T-cell (primary cell): ENCODE measurements at regions of chr9 and their contacts with region 1.

Region 1: GRCh38 chr9:3909966-3910650 is 384.3 kb upstream of the RFX3 start:
- DNase-seq: no peak
- ATAC-seq: no peak
- H3K4me3 ChIP-seq: no peak overlapping the region
- H3K4me3 Mint-ChIP-seq: no peak overlapping the region
- H3K27ac ChIP-seq: no peak overlapping the region
- H3K27ac Mint-ChIP-seq: no peak overlapping the region
- H3K4me1 ChIP-seq: no peaks in the 10 kb centered on the region
- H3K4me1 Mint-ChIP-seq: no peaks in the 10 kb centered on the region
- H3K27me3 ChIP-seq: no peaks in the 10 kb centered on the region
- H3K27me3 Mint-ChIP-seq: peaks cover 0 to 3% of the 10 kb centered on the region in 2 donors

Region 2: GRCh38 chr9:2872257-2872935 is 1037.7 kb before region 1 on chr9:
- CTCF ChIA-PET with region 1: no interaction called
- POLR2A ChIA-PET with region 1: interaction called in 1 of 2 experiments, 10 read pairs
- DNase-seq: peak in 6 of 35 experiments; percentile 3 to 54 (median 6)
- ATAC-seq: peak; percentile 46 to 79 (median 55)
- H3K4me3 ChIP-seq: no peak overlapping the region
- H3K4me3 Mint-ChIP-seq: peak overlapping the region in 1 of 3 donors; percentile 6
- H3K27ac ChIP-seq: no peak overlapping the region
- H3K27ac Mint-ChIP-seq: peak overlapping the region; percentile 66 to 74
- H3K4me1 ChIP-seq: peaks cover 0 to 5% of the 10 kb centered on the region in 2 experiments
- H3K4me1 Mint-ChIP-seq: peaks cover 21 to 36% (median 24%) of the 10 kb centered on the region in 3 donors
- H3K27me3 ChIP-seq: peaks cover 0 to 14% of the 10 kb centered on the region in 2 experiments
- H3K27me3 Mint-ChIP-seq: peaks cover 10 to 13% of the 10 kb centered on the region in 2 donors

Region 3: GRCh38 chr9:3863111-3863528 is 47.0 kb before region 1 on chr9:
- CTCF ChIA-PET with region 1: no interaction called
- POLR2A ChIA-PET with region 1: no interaction called
- DNase-seq: no peak
- ATAC-seq: no peak
- H3K4me3 ChIP-seq: no peak overlapping the region
- H3K4me3 Mint-ChIP-seq: no peak overlapping the region
- H3K27ac ChIP-seq: no peak overlapping the region
- H3K27ac Mint-ChIP-seq: no peak overlapping the region
- H3K4me1 ChIP-seq: no peaks in the 10 kb centered on the region
- H3K4me1 Mint-ChIP-seq: no peaks in the 10 kb centered on the region
- H3K27me3 ChIP-seq: no peaks in the 10 kb centered on the region
- H3K27me3 Mint-ChIP-seq: peaks cover 7 to 11% of the 10 kb centered on the region in 2 donors

Region 4: DNA sequence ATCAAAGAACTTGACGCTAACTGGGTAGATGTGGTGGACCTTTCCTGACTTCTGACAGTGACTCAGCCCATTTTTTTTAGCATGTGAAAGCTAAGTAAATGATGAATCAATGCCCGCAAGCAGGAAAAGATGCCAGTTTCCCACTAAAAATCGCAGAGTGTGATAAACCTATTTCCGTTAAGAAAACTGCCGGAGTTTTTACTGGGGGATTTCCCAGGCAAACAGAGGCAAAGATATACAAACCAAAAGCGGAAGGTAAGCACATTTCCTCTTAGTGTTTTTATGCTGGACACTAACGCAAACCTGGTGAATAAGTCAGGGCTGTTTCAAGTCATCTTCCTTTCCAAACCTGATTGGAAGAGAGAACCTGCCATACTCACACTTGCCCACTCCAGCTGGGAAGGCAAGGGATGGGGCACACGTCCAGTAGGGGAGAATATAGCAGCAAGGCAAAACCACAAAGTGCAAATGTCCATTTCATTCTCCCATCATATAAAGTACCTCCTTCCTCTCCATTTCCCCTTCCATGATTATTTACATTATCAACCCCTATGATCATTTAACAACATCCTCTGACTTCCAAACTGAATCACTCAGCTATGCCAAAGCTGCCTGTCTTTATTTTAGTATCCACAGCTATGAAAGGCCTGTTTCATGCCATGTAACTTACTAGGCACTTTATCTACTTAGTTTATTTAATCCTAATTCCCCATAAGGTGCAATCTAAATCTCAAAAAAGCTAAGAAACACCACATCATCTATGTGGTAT is 34.6 kb before region 1 on chr9:
- CTCF ChIA-PET with region 1: no interaction called
- POLR2A ChIA-PET with region 1: no interaction called
- DNase-seq: no peak
- ATAC-seq: no peak
- H3K4me3 ChIP-seq: no peak overlapping the region
- H3K4me3 Mint-ChIP-seq: no peak overlapping the region
- H3K27ac ChIP-seq: no peak overlapping the region
- H3K27ac Mint-ChIP-seq: no peak overlapping the region
- H3K4me1 ChIP-seq: no peaks in the 10 kb centered on the region
- H3K4me1 Mint-ChIP-seq: no peaks in the 10 kb centered on the region
- H3K27me3 ChIP-seq: peaks cover 0 to 14% of the 10 kb centered on the region in 2 experiments
- H3K27me3 Mint-ChIP-seq: no peaks in the 10 kb centered on the region